Activated T-helper 1 cell treated with anti-CD3 and anti-CD28 coated beads, Interleukin-12 subunit alpha, Interleukin-12 subunit beta, Interleukin-2, Interleukin-4 antibody, amounts not matched to agents 30 ng/mL and 10 ng/mL and 1 ng/mL, durations not matched to agents 14 hours and 24 hours and 36 hours (primary cell): ENCODE measurements at regions of chr11 and their contacts with region 1.

Region 1: GRCh38 chr11:32893343-32894148 is 935 bp downstream of the QSER1 start:
- DNase-seq: peak; percentile 29
- H3K4me3 Mint-ChIP-seq: peak overlapping the region; percentile 94
- H3K27ac Mint-ChIP-seq: peak overlapping the region; percentile 92
- H3K4me1 Mint-ChIP-seq: peaks cover 35% of the 10 kb centered on the region
- H3K27me3 Mint-ChIP-seq: peaks cover 14% of the 10 kb centered on the region

Region 2: DNA sequence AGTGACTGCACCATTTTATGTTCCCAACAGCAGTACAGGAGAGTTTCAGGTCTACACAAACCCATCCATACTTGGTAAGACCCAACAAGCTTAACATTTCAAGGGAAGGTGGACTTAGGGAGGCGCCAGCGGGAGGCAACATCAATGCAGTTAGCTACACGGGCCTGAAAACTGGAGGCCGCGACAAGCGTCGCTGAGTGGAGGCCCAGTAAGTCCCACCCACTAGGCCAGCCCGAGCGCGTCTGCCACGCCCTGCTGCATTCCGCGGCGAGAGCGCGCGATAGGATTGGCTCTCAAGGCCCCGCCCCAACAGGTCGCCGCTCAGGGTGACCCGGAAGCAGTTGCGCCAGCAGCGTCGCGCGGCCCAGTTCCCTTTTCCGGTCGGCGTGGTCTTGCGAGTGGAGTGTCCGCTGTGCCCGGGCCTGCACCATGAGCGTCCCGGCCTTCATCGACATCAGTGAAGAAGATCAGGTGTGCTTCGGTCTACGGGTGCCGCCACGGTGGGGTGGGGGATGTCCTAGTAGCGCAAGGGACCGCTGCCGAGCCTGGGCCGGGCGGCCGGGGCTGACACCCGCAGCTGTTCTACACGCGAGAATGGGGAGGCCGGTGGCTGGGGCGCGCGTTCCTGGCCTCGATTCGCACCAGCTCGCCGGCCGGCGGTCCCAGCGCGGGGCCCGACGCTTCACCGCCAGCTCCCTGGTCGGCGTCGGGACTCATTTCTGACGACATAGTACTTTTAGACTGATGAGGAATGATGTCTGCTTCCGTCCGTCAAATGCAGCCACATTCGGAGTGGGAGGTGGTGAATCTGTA is 309.9 kb before region 1 on chr11 and contains the start of gene EIF3M:
- intact Hi-C with region 1: loop called (anchors 5 kb)
- DNase-seq: peak; percentile 94
- H3K4me3 Mint-ChIP-seq: peak within 1 kb of the TSS; percentile 98
- H3K27ac Mint-ChIP-seq: peak within 1 kb of the TSS; percentile 98
- H3K4me1 Mint-ChIP-seq: peaks cover 38% of the 10 kb centered on the region
- H3K27me3 Mint-ChIP-seq: no peaks in the 10 kb centered on the region
- total RNA-seq, gene EIF3M: 315 and 332 TPM in 2 replicates

Region 3: DNA sequence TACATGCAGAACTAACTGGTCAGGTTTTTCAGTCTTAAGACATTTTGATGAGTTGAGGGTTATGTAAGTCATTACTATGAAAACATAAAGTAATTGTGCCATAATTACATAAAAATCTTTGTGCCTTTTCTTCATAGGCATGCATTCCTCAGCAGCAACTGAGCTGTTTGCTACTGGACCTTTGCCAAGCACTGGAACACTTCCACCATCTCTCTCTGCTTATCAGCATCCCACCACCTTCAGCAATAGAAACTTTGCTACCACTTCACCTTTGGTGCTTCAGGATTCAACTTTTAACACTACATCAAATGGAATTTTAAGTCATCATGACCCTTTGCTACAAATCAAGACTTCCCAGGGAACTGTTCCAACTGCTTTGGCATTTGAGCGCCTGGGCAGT is 38.1 kb after region 1 on chr11:
- intact Hi-C with region 1: loop called (anchors 2 kb)
- DNase-seq: no peak
- H3K4me3 Mint-ChIP-seq: no peak overlapping the region
- H3K27ac Mint-ChIP-seq: no peak overlapping the region
- H3K4me1 Mint-ChIP-seq: no peaks in the 10 kb centered on the region
- H3K27me3 Mint-ChIP-seq: no peaks in the 10 kb centered on the region

Region 4: GRCh38 chr11:33039274-33040032 is 145.9 kb after region 1 on chr11 and contains the start of gene TCP11L1:
- intact Hi-C with region 1: loop called (anchors 1 kb)
- DNase-seq: peak; percentile 72
- H3K4me3 Mint-ChIP-seq: peak within 1 kb of the TSS; percentile 93
- H3K27ac Mint-ChIP-seq: peak within 1 kb of the TSS; percentile 90
- H3K4me1 Mint-ChIP-seq: peaks cover 20% of the 10 kb centered on the region
- H3K27me3 Mint-ChIP-seq: peaks cover 13% of the 10 kb centered on the region
- total RNA-seq, gene TCP11L1: 15.0 and 16.1 TPM in 2 replicates

Region 5: DNA sequence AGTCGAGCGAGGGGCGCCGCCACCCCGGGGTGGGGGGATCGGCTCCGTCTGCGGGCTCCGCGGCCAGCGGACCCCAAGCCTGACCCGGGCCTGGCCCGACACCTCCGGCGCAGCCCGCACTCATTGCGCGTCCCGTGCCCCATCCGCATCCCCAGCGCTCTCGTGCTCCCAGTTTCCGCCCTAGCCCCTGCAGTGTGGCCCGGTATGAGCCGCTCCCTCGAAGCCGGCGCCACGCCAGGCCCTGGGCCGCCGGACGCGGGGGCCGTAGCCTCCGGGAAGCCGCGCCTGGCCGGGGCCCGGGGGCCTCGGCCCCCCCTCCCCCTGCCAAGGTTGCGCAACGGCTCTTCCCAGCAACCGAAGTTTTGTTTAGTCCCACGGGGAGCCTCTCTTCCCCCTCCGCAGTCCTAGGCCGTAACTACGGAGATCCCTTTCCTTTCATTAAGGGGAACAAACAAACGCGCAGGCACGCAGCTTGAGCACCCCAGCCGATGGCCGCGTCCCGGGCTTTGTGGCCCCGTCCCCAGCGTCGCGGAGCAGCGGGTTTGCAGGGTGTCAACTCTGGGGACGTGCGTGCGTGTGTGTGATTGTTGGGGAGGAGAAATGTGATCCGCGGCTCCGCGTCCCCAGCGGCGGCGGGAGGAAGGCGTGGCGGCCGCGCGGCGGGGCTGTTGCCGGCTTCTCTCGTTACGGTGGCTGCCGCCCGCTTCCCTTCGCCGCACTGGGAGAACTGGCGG is 364.5 kb after region 1 on chr11:
- intact Hi-C with region 1: loop called (anchors 2 kb)
- DNase-seq: peak; percentile 72
- H3K4me3 Mint-ChIP-seq: peak overlapping the region; percentile 99
- H3K27ac Mint-ChIP-seq: peak overlapping the region; percentile 99
- H3K4me1 Mint-ChIP-seq: peaks cover 46% of the 10 kb centered on the region
- H3K27me3 Mint-ChIP-seq: peaks cover 2% of the 10 kb centered on the region

Region 6: GRCh38 chr11:33588084-33588483 is 694.5 kb after region 1 on chr11:
- intact Hi-C with region 1: no loop called
- DNase-seq: no peak
- H3K4me3 Mint-ChIP-seq: no peak overlapping the region
- H3K27ac Mint-ChIP-seq: no peak overlapping the region
- H3K4me1 Mint-ChIP-seq: no peaks in the 10 kb centered on the region
- H3K27me3 Mint-ChIP-seq: no peaks in the 10 kb centered on the region

Region 7: GRCh38 chr11:34438529-34439507 is 1545.3 kb after region 1 on chr11 and contains the start of gene CAT:
- intact Hi-C with region 1: loop called (anchors 10 kb)
- DNase-seq: peak; percentile 97
- H3K4me3 Mint-ChIP-seq: peak within 1 kb of the TSS; percentile 93
- H3K27ac Mint-ChIP-seq: peak within 1 kb of the TSS; percentile 92
- H3K4me1 Mint-ChIP-seq: peaks cover 26% of the 10 kb centered on the region
- H3K27me3 Mint-ChIP-seq: no peaks in the 10 kb centered on the region
- total RNA-seq, gene CAT: 19.1 and 19.9 TPM in 2 replicates